Mammary epithelial cell (primary cell): ENCODE measurements at regions of chr11 and their contacts with region 1.

Region 1: DNA sequence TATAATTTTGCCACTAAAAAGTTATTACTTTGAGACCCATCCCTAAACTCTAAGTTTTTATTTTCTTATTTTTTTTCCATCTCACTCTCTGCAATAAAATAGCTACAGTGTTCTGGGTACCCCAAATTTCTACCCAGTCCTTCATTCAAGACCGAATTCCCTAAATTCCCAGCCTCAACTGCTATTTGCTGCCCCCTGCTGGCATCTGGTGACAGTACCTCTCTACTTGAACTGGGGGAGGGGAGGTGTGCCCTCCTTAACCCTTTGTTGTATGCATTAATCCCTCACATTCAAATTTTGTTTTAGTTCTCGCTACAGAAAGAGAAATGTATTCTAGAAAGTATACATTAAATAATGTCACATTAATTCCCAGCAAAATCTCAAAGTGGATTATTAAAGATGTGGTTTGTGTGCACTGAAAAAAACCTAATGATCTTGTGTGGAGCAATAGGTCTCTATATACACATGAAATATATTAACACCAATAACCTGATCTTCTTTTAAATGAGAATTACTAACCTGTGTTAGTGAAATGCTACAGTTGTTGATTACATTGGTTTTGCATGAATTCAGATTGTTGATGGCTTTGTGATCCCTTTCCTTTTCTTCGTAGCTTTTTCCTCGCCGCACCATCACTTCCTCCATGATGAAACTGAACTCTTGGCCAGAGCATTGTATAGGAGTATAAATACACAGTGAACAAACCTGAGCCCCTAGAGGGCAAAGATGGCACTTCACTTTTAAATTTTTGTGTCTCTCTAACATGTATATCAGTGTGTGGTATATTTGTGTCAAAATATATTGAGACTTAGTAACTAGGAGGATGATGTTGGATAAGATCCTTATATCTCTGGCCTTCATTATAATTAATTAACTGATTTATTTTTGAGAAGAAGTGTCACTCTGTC is 590.0 kb downstream of the METTL15 start:
- DNase-seq: peak; percentile 20
- H3K4me3 ChIP-seq: no peak overlapping the region
- H3K27ac ChIP-seq: no peak overlapping the region
- H3K4me1 ChIP-seq: peaks cover 20% of the 10 kb centered on the region
- H3K27me3 ChIP-seq: no peaks in the 10 kb centered on the region
- CTCF ChIP-seq: peak; percentile 78 to 93

Region 2: GRCh38 chr11:27839226-27839870 is 858.8 kb before region 1 on chr11:
- CTCF ChIA-PET with region 1: no interaction called
- dilution Hi-C with region 1: no loop called
- in situ Hi-C with region 1: no loop called
- intact Hi-C with region 1: loop called (anchors 1 kb)
- DNase-seq: no peak
- H3K4me3 ChIP-seq: no peak overlapping the region
- H3K27ac ChIP-seq: no peak overlapping the region
- H3K4me1 ChIP-seq: no peaks in the 10 kb centered on the region
- H3K27me3 ChIP-seq: no peaks in the 10 kb centered on the region
- CTCF ChIP-seq: peak; percentile 49 to 54

Region 3: GRCh38 chr11:28107748-28108618 is 590.2 kb before region 1 on chr11 and contains the starts of genes KIF18A and METTL15:
- CTCF ChIA-PET with region 1: no interaction called
- dilution Hi-C with region 1: no loop called
- in situ Hi-C with region 1: loop called in 1 of 2 experiments (anchors 25 kb)
- intact Hi-C with region 1: loop called (anchors 10 kb)
- DNase-seq: peak; percentile 99
- H3K4me3 ChIP-seq: peak within 1 kb of the TSS; percentile 77 to 93 (median 85)
- H3K27ac ChIP-seq: peak within 1 kb of the TSS; percentile 98
- H3K4me1 ChIP-seq: peaks cover 16% of the 10 kb centered on the region
- H3K27me3 ChIP-seq: no peaks in the 10 kb centered on the region
- CTCF ChIP-seq: no peak
- total RNA-seq, gene KIF18A: 1.0 to 11.6 TPM
- total RNA-seq, gene METTL15: 17.2 to 17.9 TPM

Region 4: DNA sequence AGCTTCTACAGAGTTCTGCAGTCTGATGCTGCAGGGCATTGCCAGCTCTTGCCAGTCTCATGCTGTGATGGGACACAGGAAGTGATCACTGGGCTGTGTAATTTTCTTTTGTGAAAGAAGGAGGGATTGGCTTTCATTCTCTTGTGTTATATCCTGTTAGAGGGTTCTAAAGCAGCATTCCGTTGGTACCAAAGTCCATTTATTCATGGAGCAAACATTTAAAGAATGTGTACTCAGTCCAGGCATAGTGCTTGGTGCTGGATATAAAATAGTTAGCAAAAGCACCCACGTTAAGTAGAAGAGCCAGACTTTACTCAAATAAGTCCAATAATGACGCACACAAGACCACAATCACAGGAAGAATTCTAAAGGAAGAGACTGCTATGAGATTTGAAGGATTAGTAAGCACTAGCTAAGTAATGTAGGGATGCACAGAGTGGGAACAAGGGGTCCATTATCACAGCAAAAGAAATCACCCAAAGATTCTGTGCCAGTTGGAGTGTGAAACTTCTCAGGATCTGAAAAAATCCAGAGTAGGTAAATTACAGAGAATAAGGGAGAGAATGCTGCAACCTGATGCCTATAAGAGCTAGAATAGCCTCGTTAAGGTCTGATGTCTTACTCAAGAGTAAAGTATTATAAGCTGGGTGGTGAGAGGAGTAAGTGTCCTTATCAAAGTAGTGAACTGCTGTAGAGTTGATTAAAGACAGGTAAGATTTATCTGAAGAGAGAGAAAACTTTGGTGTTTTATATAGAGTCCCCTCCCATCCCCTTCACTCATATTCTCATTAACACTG is 138.3 kb after region 1 on chr11:
- CTCF ChIA-PET with region 1: no interaction called
- dilution Hi-C with region 1: no loop called
- in situ Hi-C with region 1: no loop called
- intact Hi-C with region 1: loop called (anchors 5 kb)
- DNase-seq: peak; percentile 88
- H3K4me3 ChIP-seq: no peak overlapping the region
- H3K27ac ChIP-seq: peak overlapping the region; percentile 73
- H3K4me1 ChIP-seq: peaks cover 46% of the 10 kb centered on the region
- H3K27me3 ChIP-seq: no peaks in the 10 kb centered on the region
- CTCF ChIP-seq: no peak

Region 5: GRCh38 chr11:29019960-29020683 is 321.9 kb after region 1 on chr11:
- CTCF ChIA-PET with region 1: no interaction called
- dilution Hi-C with region 1: no loop called
- in situ Hi-C with region 1: no loop called
- intact Hi-C with region 1: loop called (anchors 5 kb)
- DNase-seq: peak; percentile 21
- H3K4me3 ChIP-seq: no peak overlapping the region
- H3K27ac ChIP-seq: no peak overlapping the region
- H3K4me1 ChIP-seq: peaks cover 35% of the 10 kb centered on the region
- H3K27me3 ChIP-seq: no peaks in the 10 kb centered on the region
- CTCF ChIP-seq: peak; percentile 60 to 67

Region 6: GRCh38 chr11:29159552-29160465 is 461.6 kb after region 1 on chr11:
- CTCF ChIA-PET with region 1: no interaction called
- dilution Hi-C with region 1: no loop called
- in situ Hi-C with region 1: no loop called
- intact Hi-C with region 1: loop called (anchors 1 kb)
- DNase-seq: peak; percentile 55
- H3K4me3 ChIP-seq: no peak overlapping the region
- H3K27ac ChIP-seq: no peak overlapping the region
- H3K4me1 ChIP-seq: peaks cover 4% of the 10 kb centered on the region
- H3K27me3 ChIP-seq: no peaks in the 10 kb centered on the region
- CTCF ChIP-seq: peak; percentile 81 to 91